Prostate gland (tissue), 2 donors: ENCODE measurements at regions of chr11 and their contacts with region 1.

Region 1: GRCh38 chr11:65711785-65712632 is at the start of gene KAT5:
- DNase-seq: peak; percentile 98
- H3K4me3 ChIP-seq: peak within 1 kb of the TSS; percentile 48 to 72
- H3K27ac ChIP-seq: peak within 1 kb of the TSS; percentile 96 to 99
- H3K4me1 ChIP-seq: peaks cover 3% of the 10 kb centered on the region
- H3K27me3 ChIP-seq: no peaks in the 10 kb centered on the region
- CTCF ChIP-seq: peak; percentile 99 to 100 (median 100)
- POLR2A ChIP-seq: peak; percentile 49
- total RNA-seq, gene KAT5: 74.8 to 107 TPM

Region 2: GRCh38 chr11:65169164-65169641 is 542.8 kb before region 1 on chr11:
- intact Hi-C with region 1: no loop called
- DNase-seq: no peak
- H3K4me3 ChIP-seq: no peak overlapping the region
- H3K27ac ChIP-seq: no peak overlapping the region
- H3K4me1 ChIP-seq: no peaks in the 10 kb centered on the region
- H3K27me3 ChIP-seq: no peaks in the 10 kb centered on the region
- CTCF ChIP-seq: no peak
- POLR2A ChIP-seq: no peak

Region 3: GRCh38 chr11:65524741-65525545 is 187.1 kb before region 1 on chr11 and contains the start of gene SCYL1:
- intact Hi-C with region 1: no loop called
- DNase-seq: peak; percentile 84
- H3K4me3 ChIP-seq: peak within 1 kb of the TSS; percentile 100
- H3K27ac ChIP-seq: peak within 1 kb of the TSS; percentile 90 to 94
- H3K4me1 ChIP-seq: peaks cover 13% of the 10 kb centered on the region
- H3K27me3 ChIP-seq: no peaks in the 10 kb centered on the region
- CTCF ChIP-seq: peak in 1 of 4 experiments; percentile 5
- POLR2A ChIP-seq: peak; percentile 50
- total RNA-seq, gene SCYL1: 125 to 177 TPM

Region 4: DNA sequence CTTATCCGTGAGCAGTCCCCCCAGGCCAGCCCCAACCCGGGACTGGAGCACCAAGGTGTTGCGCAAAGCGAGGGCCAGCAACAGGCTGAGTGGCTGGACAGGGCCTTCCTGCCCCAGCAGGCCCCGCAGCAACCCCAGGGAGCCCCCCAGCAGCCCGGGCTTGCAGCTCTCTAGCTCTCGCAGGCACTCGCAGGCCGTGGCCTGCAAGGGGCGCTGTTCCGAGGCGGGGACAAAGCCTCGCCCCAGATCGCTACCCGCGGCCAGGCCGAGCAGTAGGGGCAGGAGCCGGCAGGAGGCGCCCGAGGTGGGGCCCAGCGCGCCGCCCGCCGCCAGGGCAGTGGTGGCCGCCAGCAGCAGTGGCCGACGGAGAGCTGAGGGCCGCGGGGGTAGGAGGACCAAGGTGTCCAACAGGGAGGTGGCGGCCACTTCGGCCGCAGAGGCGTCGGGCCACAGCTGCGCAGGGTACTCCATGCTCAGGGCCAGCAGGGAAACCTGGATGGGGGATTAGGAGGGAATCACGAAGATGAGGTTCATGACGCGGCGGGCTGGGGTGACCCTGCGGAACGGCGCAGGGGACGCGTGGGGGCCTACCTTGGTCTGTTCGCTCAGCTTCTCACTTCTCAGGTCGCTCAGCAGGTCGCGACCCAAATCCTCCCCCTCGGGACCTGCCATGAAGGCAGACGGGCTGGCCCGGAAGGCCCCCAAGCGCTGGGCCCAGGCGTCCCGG is 68.0 kb after region 1 on chr11:
- intact Hi-C with region 1: loop called (anchors 5 kb)
- DNase-seq: peak; percentile 71
- H3K4me3 ChIP-seq: peak overlapping the region; percentile 84 to 88
- H3K27ac ChIP-seq: peak overlapping the region; percentile 72 to 80
- H3K4me1 ChIP-seq: peaks cover 13% of the 10 kb centered on the region
- H3K27me3 ChIP-seq: no peaks in the 10 kb centered on the region
- CTCF ChIP-seq: peak; percentile 92 to 100 (median 96)
- POLR2A ChIP-seq: peak; percentile 63

Region 5: GRCh38 chr11:65817835-65818742 is 106.1 kb after region 1 on chr11:
- intact Hi-C with region 1: loop called (anchors 2 kb)
- DNase-seq: peak; percentile 91
- H3K4me3 ChIP-seq: peak overlapping the region; percentile 51 to 56
- H3K27ac ChIP-seq: peak overlapping the region; percentile 52 to 76
- H3K4me1 ChIP-seq: no peaks in the 10 kb centered on the region
- H3K27me3 ChIP-seq: no peaks in the 10 kb centered on the region
- CTCF ChIP-seq: peak; percentile 99 to 100 (median 100)
- POLR2A ChIP-seq: peak; percentile 18

Region 6: DNA sequence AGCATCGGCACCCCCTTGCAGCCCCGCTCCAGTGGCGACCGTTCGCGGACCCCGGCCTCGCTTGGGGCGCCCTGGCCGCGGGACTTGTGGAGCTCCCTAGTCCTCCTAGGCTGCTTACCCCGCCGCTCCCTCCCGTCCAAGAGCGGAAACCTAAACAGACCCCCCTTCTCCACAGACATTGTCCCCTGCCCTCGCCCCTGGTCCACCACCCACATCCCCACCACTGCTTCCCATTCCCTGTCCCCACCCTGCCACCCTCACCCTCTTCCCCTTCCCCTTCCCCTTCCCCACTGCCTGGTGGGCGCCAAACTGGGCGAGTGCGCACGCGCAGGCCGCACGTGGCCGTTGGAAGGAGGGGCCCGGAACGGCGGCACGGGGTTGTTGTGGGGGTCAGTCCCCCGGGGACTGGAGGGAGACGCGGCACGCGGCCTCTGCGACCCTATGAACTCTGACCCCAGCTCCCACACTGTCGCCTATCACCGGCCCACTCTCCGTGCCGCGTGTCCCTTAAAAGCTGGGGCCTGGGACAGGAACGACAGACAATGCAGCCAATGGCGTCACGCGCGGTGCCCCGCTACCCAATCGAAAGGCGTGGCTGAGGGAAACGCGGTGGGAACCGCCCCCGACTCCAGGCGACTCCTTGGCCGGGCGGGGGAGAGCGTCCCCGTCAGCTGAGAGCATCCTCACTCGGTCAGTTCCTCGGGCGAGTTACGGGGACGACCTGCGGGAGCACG is 121.5 kb after region 1 on chr11 and contains the start of gene SNX32:
- intact Hi-C with region 1: loop called (anchors 5 kb)
- DNase-seq: peak; percentile 92
- H3K4me3 ChIP-seq: peak within 1 kb of the TSS; percentile 43 to 49
- H3K27ac ChIP-seq: no peak within 1 kb of the TSS
- H3K4me1 ChIP-seq: no peaks in the 10 kb centered on the region
- H3K27me3 ChIP-seq: no peaks in the 10 kb centered on the region
- CTCF ChIP-seq: no peak
- POLR2A ChIP-seq: no peak
- total RNA-seq, gene SNX32: 0.91 TPM in 1 of 2 donors, not detected in the other

Region 7: GRCh38 chr11:65859200-65859811 is 147.3 kb after region 1 on chr11:
- intact Hi-C with region 1: no loop called
- DNase-seq: peak; percentile 99
- H3K4me3 ChIP-seq: peak overlapping the region; percentile 99
- H3K27ac ChIP-seq: peak overlapping the region; percentile 94 to 96
- H3K4me1 ChIP-seq: peaks cover 12% of the 10 kb centered on the region
- H3K27me3 ChIP-seq: no peaks in the 10 kb centered on the region
- CTCF ChIP-seq: peak in 1 of 4 experiments; percentile 32
- POLR2A ChIP-seq: peak; percentile 87